ENCODE measurements at regions of chr7 and their contacts with region 1.

Region 1: GRCh38 chr7:125061776-125062397 is 132.3 kb upstream of the POT1 start:
- DNase-seq: peak in 1 of 4 experiments; percentile 41
- ATAC-seq: peak; percentile 54; the same call in 2 of the 3 replicates
- H3K4me3 ChIP-seq: no peak overlapping the region
- H3K27ac ChIP-seq: no peak overlapping the region
- H3K4me1 ChIP-seq: no peaks in the 10 kb centered on the region
- H3K27me3 ChIP-seq: no peaks in the 10 kb centered on the region
- CTCF ChIP-seq: no peak
- EP300 ChIP-seq: no peak
- POLR2A ChIP-seq: no peak
- RAD21 ChIP-seq: 0 out of 4 replicates have a peak, but pooled peaks of 1 of the 2 experiments have one; percentile 12

Region 2: GRCh38 chr7:124856299-124856888 is 205.5 kb before region 1 on chr7:
- CTCF ChIA-PET with region 1: no interaction called
- POLR2A ChIA-PET with region 1: no interaction called
- in situ Hi-C with region 1: no loop called
- intact Hi-C with region 1: no loop called
- DNase-seq: peak; percentile 26 to 52 (median 35)
- ATAC-seq: peak; percentile 87
- H3K4me3 ChIP-seq: no peak overlapping the region
- H3K27ac ChIP-seq: no peak overlapping the region
- H3K4me1 ChIP-seq: no peaks in the 10 kb centered on the region
- H3K27me3 ChIP-seq: no peaks in the 10 kb centered on the region
- CTCF ChIP-seq: peak; percentile 42 to 81 (median 61); a peak in 5 of 6 replicates
- EP300 ChIP-seq: no peak
- POLR2A ChIP-seq: no peak
- RAD21 ChIP-seq: peak; percentile 69 to 74

Region 3: GRCh38 chr7:125316466-125316865 is 254.6 kb after region 1 on chr7:
- CTCF ChIA-PET with region 1: no interaction called
- POLR2A ChIA-PET with region 1: interaction called, 3 read pairs
- in situ Hi-C with region 1: no loop called
- intact Hi-C with region 1: loop called (anchors 2 kb)
- DNase-seq: peak in 1 of 4 experiments; percentile 37
- ATAC-seq: peak; percentile 89
- H3K4me3 ChIP-seq: no peak overlapping the region
- H3K27ac ChIP-seq: no peak overlapping the region
- H3K4me1 ChIP-seq: no peaks in the 10 kb centered on the region
- H3K27me3 ChIP-seq: no peaks in the 10 kb centered on the region
- CTCF ChIP-seq: peak; percentile 24 to 39 (median 38); a peak in 3 of 6 replicates
- EP300 ChIP-seq: no peak
- POLR2A ChIP-seq: no peak
- RAD21 ChIP-seq: peak; percentile 53 to 66

Region 4: GRCh38 chr7:125670926-125671572 is 609.2 kb after region 1 on chr7:
- CTCF ChIA-PET with region 1: no interaction called
- POLR2A ChIA-PET with region 1: no interaction called
- in situ Hi-C with region 1: no loop called
- intact Hi-C with region 1: loop called (anchors 2 kb)
- DNase-seq: peak; percentile 11 to 38 (median 28)
- ATAC-seq: no peak
- H3K4me3 ChIP-seq: no peak overlapping the region
- H3K27ac ChIP-seq: no peak overlapping the region
- H3K4me1 ChIP-seq: no peaks in the 10 kb centered on the region
- H3K27me3 ChIP-seq: no peaks in the 10 kb centered on the region
- CTCF ChIP-seq: peak; percentile 17 to 50 (median 33); a peak in 4 of 6 replicates
- EP300 ChIP-seq: no peak
- POLR2A ChIP-seq: no peak
- RAD21 ChIP-seq: peak; percentile 72 to 75